ENCODE measurements at regions of chr7 and their contacts with region 1.

Region 1: DNA sequence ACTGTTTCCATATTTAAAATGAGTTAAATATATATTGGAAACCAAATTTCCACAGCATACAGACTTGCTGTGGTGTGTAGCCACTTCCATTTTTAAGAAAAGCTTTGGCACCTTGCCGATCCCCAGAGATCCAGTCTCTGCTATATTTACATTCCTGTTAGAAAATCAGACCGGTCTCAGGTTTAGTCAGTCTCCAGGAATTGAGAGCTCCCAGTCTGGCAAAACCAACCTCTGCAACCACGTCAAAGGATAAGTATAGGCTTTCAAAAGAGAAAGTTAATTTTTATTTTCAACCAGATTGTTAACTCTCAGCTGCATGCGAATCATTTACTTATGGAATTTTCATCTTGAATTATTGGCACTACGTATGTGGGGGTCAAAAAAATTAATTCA is 28.2 kb downstream of the PUS7 start:
- DNase-seq: peak in 1 of 10 donors; percentile 7
- H3K4me3 ChIP-seq: peak overlapping the region in 2 of 59 donors; percentile 1 to 27
- H3K27ac ChIP-seq: peak overlapping the region in 16 of 59 donors; percentile 1 to 69 (median 26)
- H3K27me3 ChIP-seq: no peaks in the 10 kb centered on the region
- CTCF ChIP-seq: no peak

Region 2: GRCh38 chr7:105278973-105279687 is 214.8 kb before region 1 on chr7:
- intact Hi-C with region 1: no loop called
- DNase-seq: no peak
- H3K4me3 ChIP-seq: peak overlapping the region in 53 of 59 donors; percentile 0 to 60 (median 35)
- H3K27ac ChIP-seq: peak overlapping the region in 12 of 59 donors; percentile 4 to 73 (median 28)
- H3K27me3 ChIP-seq: no peaks in the 10 kb centered on the region
- CTCF ChIP-seq: no peak

Region 3: DNA sequence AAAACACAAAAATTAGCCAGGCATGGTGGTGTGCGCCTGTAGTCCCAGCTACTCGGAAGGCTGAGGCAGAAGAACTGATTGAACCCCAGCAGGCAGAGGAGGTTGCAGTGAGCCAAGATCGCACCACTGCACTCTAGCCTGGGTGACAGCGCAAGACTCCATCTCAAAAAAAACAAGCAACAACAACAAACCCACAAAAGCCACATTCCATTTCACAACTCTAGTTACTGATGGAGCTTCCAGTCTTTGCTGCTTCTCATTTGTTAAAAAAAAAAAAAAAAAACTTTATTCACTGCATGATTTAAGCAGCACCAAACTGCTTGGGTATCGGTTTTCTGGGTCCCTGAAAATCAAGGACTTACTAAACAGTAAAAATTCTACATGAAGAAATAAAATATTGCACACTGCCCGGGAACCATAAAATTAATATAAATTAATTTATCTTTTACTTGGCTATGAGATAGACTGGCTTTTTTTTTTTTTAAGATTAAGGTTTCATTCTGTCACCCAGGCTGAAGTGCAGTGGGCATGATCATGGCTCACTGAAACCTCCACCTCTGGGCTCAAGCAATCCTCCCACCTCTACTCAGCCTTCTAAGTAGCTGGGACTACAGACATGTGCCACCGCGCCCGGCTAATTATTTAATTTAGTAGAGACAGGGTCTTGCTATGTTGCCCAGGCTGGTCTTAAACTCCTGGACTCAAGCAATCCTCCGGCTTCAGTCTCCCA is 147.2 kb before region 1 on chr7:
- intact Hi-C with region 1: loop called in 1 of 2 experiments (anchors 10 kb)
- DNase-seq: no peak
- H3K4me3 ChIP-seq: no peak overlapping the region
- H3K27ac ChIP-seq: no peak overlapping the region
- H3K27me3 ChIP-seq: no peaks in the 10 kb centered on the region
- CTCF ChIP-seq: no peak

Region 4: DNA sequence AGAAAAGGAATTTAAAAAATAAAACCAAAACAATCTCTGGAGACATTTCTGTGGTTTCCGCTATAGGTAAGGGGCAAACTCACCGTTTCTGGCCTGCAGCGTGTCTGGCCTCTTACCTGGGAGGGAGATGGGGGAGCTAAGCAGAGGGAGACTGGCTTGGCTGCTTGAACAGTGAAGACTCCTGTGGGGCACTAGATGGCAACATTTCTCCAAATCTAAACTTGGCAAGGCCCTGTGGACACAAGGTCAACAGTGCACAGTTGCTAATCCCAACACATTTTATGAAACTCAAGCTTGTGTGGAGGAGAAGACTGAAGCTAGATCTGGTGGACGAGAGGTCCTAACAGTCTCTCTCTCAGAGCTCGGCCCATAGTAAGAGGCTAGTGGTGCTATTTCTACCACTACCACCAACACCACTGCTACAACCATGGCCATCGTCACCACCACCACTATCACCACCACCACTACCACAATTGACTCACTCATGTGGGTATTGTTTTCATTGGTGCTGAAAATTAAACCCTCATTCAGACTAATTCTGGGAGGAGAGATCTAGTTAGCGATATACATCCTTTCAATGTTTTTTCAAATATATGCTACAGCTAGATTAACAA is 440.8 kb after region 1 on chr7:
- intact Hi-C with region 1: no loop called
- DNase-seq: peak in 1 of 10 donors; percentile 33
- H3K4me3 ChIP-seq: no peak overlapping the region
- H3K27ac ChIP-seq: peak overlapping the region in 7 of 59 donors; percentile 39 to 82 (median 71)
- H3K27me3 ChIP-seq: no peaks in the 10 kb centered on the region
- CTCF ChIP-seq: peak in 33 of 56 donors; percentile 8 to 55 (median 30)

Measured in dorsolateral prefrontal cortex (tissue), 120 donors.